Activated CD4-positive, alpha-beta T cell treated with anti-CD3 and anti-CD28 coated beads, Interleukin-2, amount 10 ng/mL, durations not matched to agents 24 days and 14 days (primary cell): ENCODE measurements at regions of chr15 and their contacts with region 1.

Region 1: GRCh38 chr15:65869127-65869953 is at the start of gene RAB11A:
- DNase-seq: peak; percentile 98
- H3K4me3 Mint-ChIP-seq: peak within 1 kb of the TSS; percentile 100
- H3K27ac Mint-ChIP-seq: peak within 1 kb of the TSS; percentile 99
- H3K4me1 Mint-ChIP-seq: peaks cover 32% of the 10 kb centered on the region
- H3K27me3 Mint-ChIP-seq: peaks cover 4% of the 10 kb centered on the region
- total RNA-seq, gene RAB11A: 163 TPM in 2 replicates

Region 2: DNA sequence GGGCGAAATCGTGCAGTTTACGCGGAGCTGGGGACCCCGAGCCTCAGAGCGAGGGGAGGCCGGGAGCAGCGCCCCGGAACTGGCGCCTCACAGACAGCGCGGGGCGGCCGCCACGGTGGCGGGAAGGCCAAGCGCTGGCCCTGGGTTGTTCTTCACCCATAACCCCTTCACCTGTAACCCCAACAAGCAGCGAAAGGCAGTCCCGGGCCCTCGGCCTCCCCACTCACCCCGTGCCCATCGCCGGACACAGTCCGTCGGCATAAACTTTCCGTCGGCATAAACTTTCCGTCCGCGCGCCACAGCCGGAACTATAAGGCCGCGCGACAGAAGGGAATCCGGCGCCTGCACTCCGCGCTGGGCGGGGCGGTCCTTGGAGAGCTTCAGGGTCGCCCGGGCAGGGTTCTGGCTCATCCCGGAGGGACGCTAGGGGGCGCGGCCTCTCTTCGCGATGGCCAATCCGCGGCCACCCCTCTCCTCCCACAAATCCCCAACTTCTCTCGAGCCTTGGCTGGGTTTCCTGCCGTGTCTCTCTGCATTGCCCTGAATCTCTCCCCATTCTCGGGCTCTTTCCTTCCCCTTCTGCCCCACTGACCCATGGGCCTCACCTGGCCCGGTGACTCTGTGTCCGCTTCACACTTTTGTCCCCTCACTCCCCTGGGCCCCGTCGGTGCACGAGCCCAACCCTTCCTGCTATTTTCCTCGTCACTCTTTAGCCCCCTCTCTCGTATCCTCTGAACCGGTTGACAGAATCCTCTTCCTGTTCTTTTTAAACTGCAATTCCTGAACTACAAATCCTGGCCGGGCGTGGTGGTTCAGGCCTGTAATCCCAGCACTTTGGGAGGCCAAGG is 258.2 kb before region 1 on chr15 and contains the start of gene INTS14:
- intact Hi-C with region 1: loop called (anchors 1 kb)
- DNase-seq: peak; percentile 98
- H3K4me3 Mint-ChIP-seq: peak within 1 kb of the TSS; percentile 99
- H3K27ac Mint-ChIP-seq: peak within 1 kb of the TSS; percentile 96
- H3K4me1 Mint-ChIP-seq: peaks cover 28% of the 10 kb centered on the region
- H3K27me3 Mint-ChIP-seq: no peaks in the 10 kb centered on the region
- total RNA-seq, gene INTS14: 46.4 and 49.2 TPM in 2 replicates

Region 3: GRCh38 chr15:65818927-65819562 is 50.3 kb before region 1 on chr15:
- intact Hi-C with region 1: loop called (anchors 2 kb)
- DNase-seq: peak; percentile 81
- H3K4me3 Mint-ChIP-seq: peak overlapping the region; percentile 61
- H3K27ac Mint-ChIP-seq: peak overlapping the region; percentile 85
- H3K4me1 Mint-ChIP-seq: peaks cover 44% of the 10 kb centered on the region
- H3K27me3 Mint-ChIP-seq: no peaks in the 10 kb centered on the region

Region 4: DNA sequence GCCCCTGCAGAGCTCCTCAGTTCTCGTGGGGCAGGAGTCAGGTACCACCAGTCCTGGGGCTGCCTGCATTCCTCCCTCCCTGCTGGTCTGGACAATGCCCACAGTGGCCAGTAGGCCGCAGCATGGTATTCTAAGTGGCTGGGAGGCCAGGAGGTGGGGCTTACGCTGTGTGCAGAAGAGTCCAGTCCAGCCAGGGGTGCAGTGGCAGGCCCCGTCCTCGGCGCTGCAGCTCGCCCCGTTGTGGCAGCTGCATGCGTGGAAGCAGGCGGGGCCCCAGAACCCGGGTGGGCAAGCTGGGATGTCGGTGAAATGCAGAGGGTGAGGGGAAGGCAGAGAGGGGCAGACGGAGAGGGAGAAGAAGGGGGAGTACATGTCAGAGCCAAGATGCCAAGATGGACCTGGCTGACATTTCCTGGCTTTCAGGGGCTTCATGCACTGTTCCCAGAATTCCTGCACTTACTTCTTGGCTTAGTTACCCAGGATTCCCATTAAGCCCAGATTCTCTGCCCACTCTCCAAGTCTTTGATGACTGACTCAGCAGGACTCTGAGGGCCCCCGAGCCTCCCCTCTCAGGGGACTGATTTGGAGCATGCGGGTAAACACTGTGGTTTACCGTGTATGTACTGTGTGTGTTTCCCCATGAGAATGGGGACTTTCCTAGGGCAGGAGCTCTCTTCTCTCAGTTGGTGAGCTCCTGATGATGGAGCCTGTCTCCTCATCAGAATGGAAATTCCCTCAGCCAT is 47.5 kb after region 1 on chr15:
- intact Hi-C with region 1: loop called (anchors 1 kb)
- DNase-seq: peak; percentile 88
- H3K4me3 Mint-ChIP-seq: peak overlapping the region; percentile 54
- H3K27ac Mint-ChIP-seq: peak overlapping the region; percentile 88
- H3K4me1 Mint-ChIP-seq: peaks cover 40% of the 10 kb centered on the region
- H3K27me3 Mint-ChIP-seq: no peaks in the 10 kb centered on the region

Region 5: GRCh38 chr15:66293419-66294156 is 424.2 kb after region 1 on chr15 and contains the start of gene DIS3L:
- intact Hi-C with region 1: loop called (anchors 10 kb)
- DNase-seq: peak; percentile 93
- H3K4me3 Mint-ChIP-seq: peak within 1 kb of the TSS; percentile 92
- H3K27ac Mint-ChIP-seq: peak within 1 kb of the TSS; percentile 94
- H3K4me1 Mint-ChIP-seq: peaks cover 40% of the 10 kb centered on the region
- H3K27me3 Mint-ChIP-seq: peaks cover 2% of the 10 kb centered on the region
- total RNA-seq, gene DIS3L: 48.6 and 57.2 TPM in 2 replicates